ENCODE measurements at regions of chr13 and their contacts with region 1.

Region 1: DNA sequence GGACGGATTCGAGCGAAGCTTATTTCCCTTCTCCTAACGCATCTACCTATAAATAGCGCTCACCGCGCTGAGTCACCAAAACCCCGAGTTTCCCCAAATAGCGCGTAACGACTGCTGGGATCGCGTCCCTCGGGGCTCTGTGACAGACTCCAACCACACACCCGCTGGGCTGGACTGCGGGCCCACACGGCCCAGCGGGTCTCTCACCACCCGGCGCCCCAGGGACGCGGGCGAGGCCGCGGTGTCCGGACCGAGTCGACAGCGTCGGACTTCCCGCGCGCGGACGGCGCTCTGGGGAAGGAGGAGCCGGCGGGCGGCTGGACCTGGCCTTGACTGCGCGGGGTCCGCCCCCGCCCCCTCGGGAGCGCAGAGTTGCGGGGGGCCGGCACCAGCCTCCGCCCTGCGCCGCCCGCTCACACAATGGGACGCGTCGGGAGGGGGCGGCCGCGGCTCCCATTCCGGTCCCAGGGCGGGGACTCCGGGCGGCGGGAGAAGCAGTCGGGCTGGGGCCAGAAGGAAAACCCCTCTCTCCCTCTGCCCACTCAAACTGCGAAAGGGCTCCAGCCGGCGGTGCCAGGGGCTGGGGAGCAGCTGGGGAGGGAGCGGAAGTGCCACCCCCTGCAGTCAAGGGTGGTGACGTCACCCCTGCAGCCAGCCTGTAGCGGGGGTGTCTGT is 108.8 kb downstream of the KCNRG start:
- DNase-seq: peak in 4 of 5 donors; percentile 67 to 93 (median 74)
- H3K4me3 ChIP-seq: peak overlapping the region; percentile 48 to 92
- H3K4me3 Mint-ChIP-seq: peak overlapping the region; percentile 84 to 97 (median 91)
- H3K27ac ChIP-seq: peak overlapping the region; percentile 98
- H3K27ac Mint-ChIP-seq: peak overlapping the region; percentile 94 to 99 (median 97)
- H3K4me1 ChIP-seq: peaks cover 64% of the 10 kb centered on the region
- H3K4me1 Mint-ChIP-seq: peaks cover 36 to 70% (median 55%) of the 10 kb centered on the region in 4 donors
- H3K27me3 ChIP-seq: no peaks in the 10 kb centered on the region
- H3K27me3 Mint-ChIP-seq: peaks cover 3 to 10% of the 10 kb centered on the region in 2 donors

Region 2: DNA sequence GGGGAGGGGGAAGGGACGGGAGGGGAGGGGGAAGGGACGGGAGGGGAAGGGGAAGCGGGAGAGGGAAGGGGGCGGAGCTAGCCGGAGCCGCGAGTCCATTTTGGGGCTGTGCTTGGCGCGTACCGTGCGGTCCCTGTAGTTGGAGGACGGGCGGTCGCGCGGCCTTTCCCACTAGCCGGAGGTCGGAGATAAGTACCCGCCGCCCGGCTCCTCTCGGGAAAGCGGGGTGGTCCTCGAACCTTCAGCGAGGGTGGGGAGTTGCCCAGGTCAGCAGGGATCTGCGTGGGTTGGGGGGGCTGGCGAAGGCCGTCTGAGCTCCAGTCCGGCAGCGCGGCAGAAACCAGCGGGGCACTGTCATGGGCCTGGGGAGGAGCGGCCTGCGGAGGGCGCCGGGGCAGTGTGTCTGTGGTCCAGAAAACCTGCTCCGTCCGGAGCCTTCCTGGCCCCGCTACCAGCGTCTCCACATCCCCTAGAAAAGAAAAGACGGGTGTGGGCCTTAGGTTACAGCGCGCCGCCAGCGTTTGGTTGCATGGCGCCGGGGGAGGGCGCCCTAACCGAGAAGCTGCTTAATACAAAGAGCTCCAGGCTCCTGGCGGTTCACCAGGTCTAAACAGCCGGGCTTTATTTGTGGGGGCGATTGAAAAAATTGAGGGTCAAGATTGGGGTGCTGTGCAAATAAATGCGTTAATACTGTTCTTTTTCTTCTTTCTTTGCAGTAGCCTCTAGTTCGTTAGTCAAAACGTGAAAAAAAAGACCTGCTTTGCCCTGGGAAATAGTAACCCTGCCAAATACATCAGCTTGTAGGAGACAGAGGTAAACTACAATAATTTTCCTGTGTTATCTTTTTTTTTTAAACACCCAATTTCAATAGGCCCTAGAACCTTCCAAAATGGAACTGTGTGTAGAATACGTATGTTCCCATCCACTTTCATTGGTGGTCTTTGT is 126.8 kb before region 1 on chr13 and contains the start of gene TRIM13:
- CTCF ChIA-PET with region 1: interaction called, 54 read pairs
- POLR2A ChIA-PET with region 1: interaction called, 219 read pairs
- intact Hi-C with region 1: loop called (anchors 1 kb)
- DNase-seq: peak; percentile 81 to 85 (median 84)
- H3K4me3 ChIP-seq: peak within 1 kb of the TSS; percentile 82 to 96
- H3K4me3 Mint-ChIP-seq: peak within 1 kb of the TSS; percentile 89 to 94 (median 90)
- H3K27ac ChIP-seq: peak within 1 kb of the TSS; percentile 83
- H3K27ac Mint-ChIP-seq: peak within 1 kb of the TSS; percentile 84 to 93 (median 91)
- H3K4me1 ChIP-seq: peaks cover 59% of the 10 kb centered on the region
- H3K4me1 Mint-ChIP-seq: peaks cover 30 to 63% (median 43%) of the 10 kb centered on the region in 4 donors
- H3K27me3 ChIP-seq: no peaks in the 10 kb centered on the region
- H3K27me3 Mint-ChIP-seq: no peaks in the 10 kb centered on the region
- total RNA-seq, gene TRIM13: 30.3 to 32.4 TPM

Region 3: DNA sequence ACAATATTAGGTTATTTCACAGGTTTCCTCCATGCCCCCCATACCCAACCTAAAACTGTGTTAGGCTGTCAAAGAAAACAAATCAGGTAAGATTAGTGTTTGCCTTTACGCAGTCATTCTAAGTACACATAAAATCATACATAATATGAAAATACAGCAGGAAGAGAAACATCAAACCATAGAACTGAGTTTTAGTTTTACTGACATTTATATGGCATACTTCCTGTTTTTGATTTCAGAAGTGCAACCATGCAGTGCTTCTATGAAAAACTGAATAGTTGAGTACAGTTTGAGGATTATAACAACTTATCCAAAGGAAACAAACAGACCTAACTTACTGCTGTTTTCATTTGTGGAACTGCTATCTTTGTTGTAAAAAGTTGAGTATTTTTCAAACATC is 17.4 kb before region 1 on chr13:
- CTCF ChIA-PET with region 1: interaction called, 6 read pairs
- POLR2A ChIA-PET with region 1: interaction called, 79 read pairs
- intact Hi-C with region 1: loop called (anchors 2 kb)
- DNase-seq: no peak
- H3K4me3 ChIP-seq: no peak overlapping the region
- H3K4me3 Mint-ChIP-seq: peak overlapping the region in 7 of 8 donors; percentile 21 to 88 (median 65)
- H3K27ac ChIP-seq: peak overlapping the region; percentile 36
- H3K27ac Mint-ChIP-seq: peak overlapping the region; percentile 36 to 93 (median 86)
- H3K4me1 ChIP-seq: peaks cover 52% of the 10 kb centered on the region
- H3K4me1 Mint-ChIP-seq: peaks cover 35 to 66% (median 48%) of the 10 kb centered on the region in 4 donors
- H3K27me3 ChIP-seq: no peaks in the 10 kb centered on the region
- H3K27me3 Mint-ChIP-seq: no peaks in the 10 kb centered on the region

Region 4: DNA sequence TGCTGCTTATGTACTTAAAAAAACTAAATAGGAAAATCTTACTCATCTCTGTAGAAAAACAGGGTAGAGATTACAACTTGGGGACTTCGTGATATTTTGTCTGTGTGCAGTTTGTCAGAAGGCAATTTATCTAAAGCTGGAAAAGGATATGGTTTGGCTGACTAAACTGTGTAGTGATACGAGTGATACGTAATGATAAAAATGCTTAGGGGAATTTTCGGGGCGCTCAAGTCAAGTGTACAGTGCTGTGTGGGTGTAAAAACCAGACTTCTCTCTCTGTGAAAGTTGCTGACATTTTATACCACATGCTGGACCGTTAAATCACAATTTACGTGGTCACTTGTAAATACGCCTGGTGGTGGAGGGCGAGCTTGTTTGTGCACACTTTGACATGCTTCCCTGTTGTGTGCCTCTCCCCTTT is 112.9 kb after region 1 on chr13:
- CTCF ChIA-PET with region 1: interaction called, 6 read pairs
- POLR2A ChIA-PET with region 1: interaction called, 61 read pairs
- intact Hi-C with region 1: loop called (anchors 2 kb)
- DNase-seq: peak; percentile 52 to 74 (median 56)
- H3K4me3 ChIP-seq: peak overlapping the region in 1 of 2 donors; percentile 55
- H3K4me3 Mint-ChIP-seq: peak overlapping the region; percentile 76 to 93 (median 86)
- H3K27ac ChIP-seq: peak overlapping the region; percentile 77
- H3K27ac Mint-ChIP-seq: peak overlapping the region; percentile 83 to 97 (median 95)
- H3K4me1 ChIP-seq: peaks cover 39% of the 10 kb centered on the region
- H3K4me1 Mint-ChIP-seq: peaks cover 32 to 52% (median 37%) of the 10 kb centered on the region in 4 donors
- H3K27me3 ChIP-seq: no peaks in the 10 kb centered on the region
- H3K27me3 Mint-ChIP-seq: no peaks in the 10 kb centered on the region

Region 5: GRCh38 chr13:50365408-50366391 is 241.7 kb after region 1 on chr13:
- CTCF ChIA-PET with region 1: no interaction called
- POLR2A ChIA-PET with region 1: interaction called, 67 read pairs
- intact Hi-C with region 1: loop called (anchors 5 kb)
- DNase-seq: peak; percentile 49 to 69 (median 57)
- H3K4me3 ChIP-seq: peak overlapping the region; percentile 36 to 37
- H3K4me3 Mint-ChIP-seq: peak overlapping the region; percentile 77 to 87 (median 83)
- H3K27ac ChIP-seq: peak overlapping the region; percentile 68
- H3K27ac Mint-ChIP-seq: peak overlapping the region; percentile 93 to 97 (median 96)
- H3K4me1 ChIP-seq: peaks cover 43% of the 10 kb centered on the region
- H3K4me1 Mint-ChIP-seq: peaks cover 49 to 61% (median 55%) of the 10 kb centered on the region in 4 donors
- H3K27me3 ChIP-seq: no peaks in the 10 kb centered on the region
- H3K27me3 Mint-ChIP-seq: peaks cover 0 to 2% of the 10 kb centered on the region in 2 donors

Region 6: DNA sequence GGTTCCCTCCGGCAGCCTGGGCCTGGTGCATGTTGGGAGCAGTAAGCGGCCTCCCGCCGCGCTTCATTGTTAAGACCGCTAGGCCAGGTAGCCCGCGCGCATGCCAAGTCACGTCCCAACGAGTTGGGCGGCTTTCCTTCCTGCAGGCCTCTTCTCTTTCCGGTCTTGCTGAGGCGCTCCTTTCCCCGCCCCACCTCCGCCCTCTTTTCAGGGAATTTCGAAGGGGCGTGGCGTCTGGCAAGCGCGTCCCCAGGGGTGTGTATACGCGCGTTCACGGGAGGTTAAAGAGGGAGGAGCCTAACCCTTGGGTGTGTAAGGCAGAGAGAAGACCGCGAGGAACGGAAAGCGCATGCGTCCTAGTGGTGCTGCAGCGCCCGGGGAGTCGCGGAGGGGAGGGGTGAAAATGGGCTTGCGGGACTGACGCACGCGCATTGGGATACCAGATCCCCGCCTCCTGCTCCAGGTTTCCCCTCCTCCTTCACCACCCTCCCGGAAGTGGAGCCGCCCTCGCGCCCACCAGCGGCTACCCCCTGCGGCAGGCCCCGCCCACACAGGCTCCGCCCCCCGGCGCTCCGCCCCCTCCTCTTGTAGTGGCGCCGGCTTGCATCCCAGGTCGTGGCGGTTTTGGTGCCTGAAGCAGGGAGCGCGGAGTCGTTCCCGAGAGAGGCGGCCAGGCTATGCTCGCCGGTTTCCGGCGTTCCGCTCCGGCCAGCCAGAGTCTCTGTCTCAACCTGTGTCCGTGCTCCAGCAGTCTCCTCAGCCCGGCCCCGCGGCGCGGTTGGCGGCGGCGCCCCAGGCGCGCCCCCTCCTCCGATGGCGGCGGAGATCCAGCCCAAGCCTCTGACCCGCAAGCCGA is 1460.1 kb after region 1 on chr13 and contains the start of gene WDFY2:
- CTCF ChIA-PET with region 1: no interaction called
- POLR2A ChIA-PET with region 1: no interaction called
- intact Hi-C with region 1: loop called (anchors 5 kb)
- DNase-seq: peak; percentile 99 to 100 (median 100)
- H3K4me3 ChIP-seq: peak within 1 kb of the TSS; percentile 65 to 92
- H3K4me3 Mint-ChIP-seq: peak within 1 kb of the TSS; percentile 97 to 100 (median 99)
- H3K27ac ChIP-seq: peak within 1 kb of the TSS; percentile 88
- H3K27ac Mint-ChIP-seq: peak within 1 kb of the TSS; percentile 96 to 100 (median 100)
- H3K4me1 ChIP-seq: peaks cover 26% of the 10 kb centered on the region
- H3K4me1 Mint-ChIP-seq: peaks cover 27 to 44% (median 35%) of the 10 kb centered on the region in 4 donors
- H3K27me3 ChIP-seq: no peaks in the 10 kb centered on the region
- H3K27me3 Mint-ChIP-seq: no peaks in the 10 kb centered on the region
- total RNA-seq, gene WDFY2: 20.0 to 21.8 TPM